Activated CD4-positive, alpha-beta memory T cell treated with anti-CD3 and anti-CD28 coated beads for 36 hours (primary cell): ENCODE measurements at regions of chr2 and their contacts with region 1.

Region 1: DNA sequence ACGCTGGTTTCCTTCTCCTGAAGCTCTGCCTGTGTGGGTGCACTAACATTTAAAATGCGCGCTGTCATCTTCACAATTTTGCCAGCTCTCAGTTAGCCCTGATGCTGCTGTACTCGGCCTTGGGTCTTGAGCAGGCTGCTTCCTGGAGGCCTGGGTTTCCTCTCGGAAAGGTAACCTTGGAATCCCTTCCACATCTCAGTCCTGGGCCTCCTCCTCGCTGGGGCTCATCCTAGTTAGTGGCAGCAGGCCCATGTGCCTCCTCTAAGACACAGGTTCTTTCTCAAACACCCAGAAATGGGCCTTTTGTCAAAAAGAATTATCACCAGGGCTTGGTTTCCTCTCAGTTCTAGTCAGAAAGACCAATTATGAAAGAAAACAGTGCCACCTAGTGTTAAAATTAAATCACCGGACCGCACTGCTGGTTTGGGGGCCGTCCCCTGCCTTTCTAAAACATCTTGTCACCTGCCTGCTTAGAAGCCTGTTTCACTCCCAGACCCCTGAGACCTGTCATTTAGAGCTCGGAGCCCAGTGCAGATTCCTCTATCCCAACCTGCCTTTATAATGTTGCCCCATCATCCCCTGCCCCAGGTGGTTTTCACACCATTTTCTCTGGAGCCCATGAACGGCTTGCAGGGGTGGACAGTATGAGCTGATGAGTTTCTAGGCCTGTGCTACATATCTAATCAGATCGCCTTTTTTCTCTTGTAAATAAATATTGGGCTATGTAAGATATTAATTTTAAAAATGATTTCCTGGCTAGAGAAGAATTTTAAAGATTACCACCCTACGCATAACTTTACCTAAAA is 42.4 kb downstream of the HK2 start:
- DNase-seq: peak; percentile 59
- H3K4me3 Mint-ChIP-seq: no peak overlapping the region
- H3K27ac Mint-ChIP-seq: no peak overlapping the region
- H3K4me1 Mint-ChIP-seq: no peaks in the 10 kb centered on the region
- H3K27me3 Mint-ChIP-seq: no peaks in the 10 kb centered on the region

Region 2: GRCh38 chr2:74690571-74690970 is 185.7 kb before region 1 on chr2:
- CTCF ChIA-PET with region 1: interaction called, 18 read pairs
- POLR2A ChIA-PET with region 1: no interaction called
- intact Hi-C with region 1: no loop called
- DNase-seq: no peak
- H3K4me3 Mint-ChIP-seq: no peak overlapping the region
- H3K27ac Mint-ChIP-seq: no peak overlapping the region
- H3K4me1 Mint-ChIP-seq: no peaks in the 10 kb centered on the region
- H3K27me3 Mint-ChIP-seq: peaks cover 2% of the 10 kb centered on the region

Region 3: DNA sequence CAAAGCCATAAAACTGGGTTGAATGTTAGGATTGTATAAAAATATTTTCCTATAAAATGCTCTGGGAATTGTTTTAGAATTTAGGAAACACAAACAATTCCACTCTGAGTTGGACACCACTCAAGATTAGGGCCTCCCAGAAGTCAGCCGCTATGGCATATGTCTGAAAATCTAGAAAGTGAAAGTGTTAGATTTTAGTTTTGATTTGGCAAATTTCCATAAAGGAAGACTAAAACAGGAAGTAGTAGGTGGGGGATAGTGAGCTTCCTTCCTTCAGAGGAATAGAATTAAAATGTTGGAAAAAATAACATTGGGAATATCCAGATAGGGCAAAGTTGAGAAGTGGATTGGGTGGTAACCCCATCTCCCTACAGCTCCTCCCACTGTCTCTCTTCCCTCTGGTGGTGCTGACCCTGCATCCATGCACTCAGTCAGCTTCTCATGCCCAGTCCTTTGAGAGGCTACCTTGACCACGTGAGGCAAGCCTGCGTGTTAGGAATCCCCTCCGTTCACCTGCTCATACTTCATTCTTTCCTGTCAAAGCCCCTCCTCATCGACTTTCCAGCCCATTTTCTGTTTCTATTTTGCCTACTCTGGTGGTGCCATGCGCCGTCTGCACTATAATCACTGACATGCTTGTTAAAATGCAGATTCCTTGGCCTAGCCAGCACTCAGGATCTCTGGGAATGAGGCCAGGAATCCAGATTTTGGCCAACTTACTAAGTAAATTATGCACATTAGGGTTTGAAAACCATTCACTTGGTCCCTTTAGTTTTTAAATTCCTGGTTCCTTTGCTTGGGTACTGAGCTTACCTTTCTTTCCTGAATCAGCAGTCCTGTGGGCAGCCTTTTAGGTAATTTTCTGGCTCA is 165.7 kb after region 1 on chr2:
- CTCF ChIA-PET with region 1: no interaction called
- POLR2A ChIA-PET with region 1: no interaction called
- intact Hi-C with region 1: no loop called
- DNase-seq: no peak
- H3K4me3 Mint-ChIP-seq: no peak overlapping the region
- H3K27ac Mint-ChIP-seq: no peak overlapping the region
- H3K4me1 Mint-ChIP-seq: no peaks in the 10 kb centered on the region
- H3K27me3 Mint-ChIP-seq: no peaks in the 10 kb centered on the region